Activated CD4-positive, alpha-beta memory T cell treated with anti-CD3 and anti-CD28 coated beads for 36 hours (primary cell): ENCODE measurements at regions of chr19 and their contacts with region 1.

Region 1: GRCh38 chr19:33302175-33302973 is at the start of gene CEBPA:
- DNase-seq: peak; percentile 68
- H3K4me3 Mint-ChIP-seq: peak within 1 kb of the TSS; percentile 54
- H3K27ac Mint-ChIP-seq: no peak within 1 kb of the TSS
- H3K4me1 Mint-ChIP-seq: no peaks in the 10 kb centered on the region
- H3K27me3 Mint-ChIP-seq: peaks cover 29% of the 10 kb centered on the region
- total RNA-seq, gene CEBPA: 0.22 to 0.33 TPM

Region 2: DNA sequence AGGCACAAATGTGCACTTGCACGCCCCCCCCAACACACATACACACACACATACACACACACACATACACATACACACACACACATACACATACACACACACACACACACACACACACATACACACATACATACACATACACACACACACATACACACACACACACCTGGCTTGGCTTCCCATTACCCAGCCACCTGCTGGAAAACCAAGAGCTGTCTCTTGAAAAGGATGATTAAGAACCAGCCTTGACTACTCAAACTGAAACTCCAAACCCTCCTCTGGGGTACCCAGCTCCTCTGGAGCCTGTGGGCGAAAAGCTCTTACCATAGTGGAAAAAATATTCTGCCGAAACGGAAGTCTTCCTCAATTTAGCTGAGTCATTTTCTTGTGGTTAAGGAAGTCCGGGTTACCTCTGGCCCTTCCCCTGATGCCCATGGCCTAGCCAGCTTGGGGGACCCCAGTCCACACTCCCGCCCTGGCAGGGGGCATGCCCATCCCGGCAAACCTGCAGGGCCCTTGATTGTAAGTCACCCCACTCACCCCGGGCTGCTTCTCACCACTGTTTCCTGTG is 21.9 kb before region 1 on chr19:
- CTCF ChIA-PET with region 1: interaction called, 10 read pairs
- POLR2A ChIA-PET with region 1: no interaction called
- intact Hi-C with region 1: no loop called
- DNase-seq: peak; percentile 76
- H3K4me3 Mint-ChIP-seq: peak overlapping the region; percentile 42
- H3K27ac Mint-ChIP-seq: peak overlapping the region; percentile 68
- H3K4me1 Mint-ChIP-seq: peaks cover 12% of the 10 kb centered on the region
- H3K27me3 Mint-ChIP-seq: peaks cover 3% of the 10 kb centered on the region